OCI-LY7 (cell line): ENCODE measurements at regions of chr5 and their contacts with region 1.

Region 1: DNA sequence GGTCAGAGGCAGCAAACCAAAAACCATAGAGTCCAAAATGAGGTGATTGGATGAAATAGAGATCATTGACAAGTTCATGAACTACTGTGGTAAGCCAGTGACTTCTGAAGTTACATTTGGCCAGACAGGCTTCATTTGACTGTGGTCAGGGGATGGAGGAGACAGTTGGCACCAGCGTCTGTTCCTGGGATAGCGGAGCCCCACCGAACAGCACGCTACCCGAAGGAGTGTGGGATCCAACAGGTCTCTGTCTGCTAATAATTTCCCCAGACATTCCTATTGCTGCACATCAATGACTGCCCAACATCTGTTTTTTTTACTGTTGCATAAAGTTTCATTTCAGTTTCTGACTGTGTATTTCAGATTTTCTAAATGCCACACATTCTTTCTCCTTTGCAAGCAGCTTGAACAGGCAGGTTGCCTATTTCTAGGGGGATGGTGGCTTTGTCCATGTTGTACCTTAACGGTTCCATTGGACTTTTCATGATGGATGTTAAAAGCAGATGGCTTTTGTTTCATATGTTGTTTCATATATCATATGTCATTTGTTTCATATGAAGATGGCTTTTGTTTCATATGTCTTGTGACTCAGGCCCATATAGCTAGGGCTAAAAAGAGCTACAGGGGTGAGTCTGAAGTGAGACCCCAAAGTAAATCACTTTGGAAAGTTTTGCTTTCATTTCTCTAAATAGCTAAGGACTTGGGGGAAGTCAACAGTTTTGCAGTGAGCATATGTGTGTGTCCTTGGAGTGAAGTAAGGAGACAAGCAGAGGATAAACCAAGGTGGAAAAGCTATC is 180.8 kb downstream of the GOLPH3 start:
- DNase-seq: peak; percentile 41
- H3K4me3 ChIP-seq: peak overlapping the region; percentile 18
- H3K27ac ChIP-seq: peak overlapping the region; percentile 88
- H3K4me1 ChIP-seq: peaks cover 56% of the 10 kb centered on the region
- CTCF ChIP-seq: no peak

Region 2: DNA sequence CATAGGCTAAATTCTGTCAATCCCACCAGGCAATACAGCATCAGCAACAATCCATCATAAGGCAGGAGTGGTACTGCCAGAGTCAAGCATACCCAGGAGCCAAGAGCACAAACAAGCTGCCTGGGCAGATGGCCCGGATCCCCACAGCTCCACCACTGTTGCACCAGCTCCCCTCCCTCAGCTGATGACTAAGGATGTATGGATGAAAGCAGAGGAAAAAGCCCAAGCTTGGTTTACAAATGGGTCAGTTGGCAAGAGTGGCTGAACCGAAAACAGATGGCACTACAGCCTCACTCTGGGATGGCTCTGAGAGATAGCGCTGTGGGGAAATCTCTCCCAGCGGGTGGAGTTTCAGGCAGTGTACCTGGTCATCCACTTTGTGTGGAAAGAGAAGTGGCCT is 490.9 kb before region 1 on chr5:
- CTCF ChIA-PET with region 1: no interaction called
- POLR2A ChIA-PET with region 1: no interaction called
- intact Hi-C with region 1: no loop called
- DNase-seq: no peak
- H3K4me3 ChIP-seq: no peak overlapping the region
- H3K27ac ChIP-seq: no peak overlapping the region
- H3K4me1 ChIP-seq: no peaks in the 10 kb centered on the region
- CTCF ChIP-seq: no peak

Region 3: GRCh38 chr5:31573494-31574142 is 419.7 kb before region 1 on chr5:
- CTCF ChIA-PET with region 1: no interaction called
- POLR2A ChIA-PET with region 1: no interaction called
- intact Hi-C with region 1: no loop called
- DNase-seq: no peak
- H3K4me3 ChIP-seq: no peak overlapping the region
- H3K27ac ChIP-seq: no peak overlapping the region
- H3K4me1 ChIP-seq: no peaks in the 10 kb centered on the region
- CTCF ChIP-seq: no peak

Region 4: GRCh38 chr5:31934156-31934555 is 59.2 kb before region 1 on chr5:
- CTCF ChIA-PET with region 1: no interaction called
- POLR2A ChIA-PET with region 1: no interaction called
- intact Hi-C with region 1: loop called (anchors 1 kb)
- DNase-seq: no peak
- H3K4me3 ChIP-seq: no peak overlapping the region
- H3K27ac ChIP-seq: no peak overlapping the region
- H3K4me1 ChIP-seq: no peaks in the 10 kb centered on the region
- CTCF ChIP-seq: no peak

Region 5: GRCh38 chr5:32004404-32004803 is 11.0 kb after region 1 on chr5:
- CTCF ChIA-PET with region 1: interaction called, 3 read pairs
- POLR2A ChIA-PET with region 1: interaction called, 23 read pairs
- intact Hi-C with region 1: loop called (anchors 1 kb)
- DNase-seq: peak; percentile 74
- H3K4me3 ChIP-seq: peak overlapping the region; percentile 52
- H3K27ac ChIP-seq: peak overlapping the region; percentile 80
- H3K4me1 ChIP-seq: peaks cover 34% of the 10 kb centered on the region
- CTCF ChIP-seq: no peak

Region 6: DNA sequence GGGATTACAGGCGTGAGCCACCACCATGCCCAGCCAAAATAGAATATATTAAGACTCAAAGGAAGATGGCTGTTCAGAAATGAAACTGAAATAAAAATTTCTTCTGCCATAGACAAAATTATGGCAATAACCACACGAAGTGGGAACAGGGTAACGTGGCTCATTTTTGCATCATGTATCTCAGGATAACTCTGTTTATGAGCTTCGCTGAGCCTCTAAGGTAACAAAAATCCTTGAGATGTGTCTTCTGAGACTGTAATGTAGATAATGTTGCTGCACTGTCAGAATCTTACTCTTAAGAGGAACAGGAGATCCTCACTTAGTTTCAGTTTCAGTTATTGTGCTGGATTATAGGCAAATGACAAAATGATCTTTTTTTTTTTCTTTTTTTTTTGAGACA is 26.9 kb after region 1 on chr5:
- CTCF ChIA-PET with region 1: interaction called, 3 read pairs
- POLR2A ChIA-PET with region 1: interaction called, 42 read pairs
- intact Hi-C with region 1: loop called (anchors 1 kb)
- DNase-seq: peak; percentile 77
- H3K4me3 ChIP-seq: peak overlapping the region; percentile 53
- H3K27ac ChIP-seq: peak overlapping the region; percentile 63
- H3K4me1 ChIP-seq: peaks cover 56% of the 10 kb centered on the region
- CTCF ChIP-seq: no peak

Region 7: GRCh38 chr5:32076699-32077695 is 83.6 kb after region 1 on chr5:
- CTCF ChIA-PET with region 1: no interaction called
- POLR2A ChIA-PET with region 1: interaction called, 3 read pairs
- intact Hi-C with region 1: loop called (anchors 5 kb)
- DNase-seq: peak; percentile 68
- H3K4me3 ChIP-seq: no peak overlapping the region
- H3K27ac ChIP-seq: no peak overlapping the region
- H3K4me1 ChIP-seq: no peaks in the 10 kb centered on the region
- CTCF ChIP-seq: peak; percentile 99

Region 8: DNA sequence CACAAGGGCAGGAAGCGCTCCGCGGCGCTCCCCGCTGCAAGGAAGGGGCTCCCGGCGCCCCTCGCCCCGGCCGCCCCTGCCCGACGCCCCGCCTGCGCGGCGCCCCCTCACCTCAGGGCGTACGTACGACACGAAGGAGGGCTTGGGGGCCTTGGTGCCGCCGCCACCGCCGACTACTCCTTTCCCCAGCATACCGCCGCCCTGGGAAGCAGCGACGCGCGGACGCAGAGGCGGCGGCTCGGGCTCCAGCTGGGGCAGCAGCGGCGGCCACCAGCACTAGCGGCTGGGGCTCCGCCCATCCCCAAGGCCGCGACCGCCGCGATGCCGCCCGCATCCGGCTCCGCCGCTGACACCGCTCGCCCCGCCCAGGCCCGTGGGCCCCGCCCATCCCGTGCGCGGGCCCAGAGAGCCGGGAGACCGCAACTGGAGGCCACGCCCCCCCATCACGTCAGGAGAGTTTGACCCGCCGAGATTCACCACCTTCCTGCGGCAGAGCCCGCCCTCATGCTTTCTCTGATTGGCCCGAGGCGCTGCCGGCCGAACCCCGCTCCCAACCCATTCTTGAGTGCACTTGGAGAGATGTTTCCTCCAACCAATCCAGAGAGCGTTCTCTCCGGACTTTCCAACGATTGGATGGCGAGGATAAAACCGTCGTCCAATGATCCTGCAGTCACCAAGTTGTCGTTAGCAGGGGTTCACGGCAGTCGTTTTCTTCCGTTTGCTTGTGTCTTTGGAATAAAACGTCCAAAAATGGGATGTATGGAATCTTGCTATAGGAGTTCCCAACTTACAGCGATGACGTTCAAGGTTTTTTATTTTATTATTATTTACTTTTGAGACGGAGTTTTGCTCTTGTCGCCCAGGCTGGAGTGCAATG is 319.5 kb after region 1 on chr5 and contains the start of gene MTMR12:
- CTCF ChIA-PET with region 1: no interaction called
- POLR2A ChIA-PET with region 1: no interaction called
- intact Hi-C with region 1: loop called (anchors 10 kb)
- DNase-seq: peak; percentile 99
- H3K4me3 ChIP-seq: peak within 1 kb of the TSS; percentile 90
- H3K27ac ChIP-seq: peak within 1 kb of the TSS; percentile 85
- H3K4me1 ChIP-seq: peaks cover 38% of the 10 kb centered on the region
- CTCF ChIP-seq: 0 out of 2 replicates have a peak, but pooled peaks have one; percentile 15
- total RNA-seq, gene MTMR12: 32.5 and 33.6 TPM in 2 replicates

Region 9: GRCh38 chr5:33440482-33441240 is 1447.3 kb after region 1 on chr5 and contains the start of gene TARS1:
- CTCF ChIA-PET with region 1: no interaction called
- POLR2A ChIA-PET with region 1: no interaction called
- intact Hi-C with region 1: loop called (anchors 5 kb)
- DNase-seq: peak; percentile 96
- H3K4me3 ChIP-seq: peak within 1 kb of the TSS; percentile 84
- H3K27ac ChIP-seq: peak within 1 kb of the TSS; percentile 66
- H3K4me1 ChIP-seq: peaks cover 15% of the 10 kb centered on the region
- CTCF ChIP-seq: no peak
- total RNA-seq, gene TARS1: 101 and 118 TPM in 2 replicates